ENCODE measurements at regions of chr15 and their contacts with region 1.

Region 1: GRCh38 chr15:74322181-74323076 is 45.0 kb downstream of the CYP11A1 start:
- DNase-seq: peak; percentile 38
- ATAC-seq: peak; percentile 81
- H3K4me3 Mint-ChIP-seq: no peak overlapping the region
- H3K27ac Mint-ChIP-seq: no peak overlapping the region
- H3K4me1 Mint-ChIP-seq: peaks cover 2% of the 10 kb centered on the region
- H3K27me3 Mint-ChIP-seq: peaks cover 10% of the 10 kb centered on the region
- CTCF ChIP-seq: no peak

Region 2: GRCh38 chr15:74038707-74039655 is 283.4 kb before region 1 on chr15:
- CTCF ChIA-PET with region 1: no interaction called
- POLR2A ChIA-PET with region 1: no interaction called
- intact Hi-C with region 1: no loop called
- DNase-seq: no peak
- ATAC-seq: no peak
- H3K4me3 Mint-ChIP-seq: no peak overlapping the region
- H3K27ac Mint-ChIP-seq: no peak overlapping the region
- H3K4me1 Mint-ChIP-seq: no peaks in the 10 kb centered on the region
- H3K27me3 Mint-ChIP-seq: no peaks in the 10 kb centered on the region
- CTCF ChIP-seq: no peak

Region 3: DNA sequence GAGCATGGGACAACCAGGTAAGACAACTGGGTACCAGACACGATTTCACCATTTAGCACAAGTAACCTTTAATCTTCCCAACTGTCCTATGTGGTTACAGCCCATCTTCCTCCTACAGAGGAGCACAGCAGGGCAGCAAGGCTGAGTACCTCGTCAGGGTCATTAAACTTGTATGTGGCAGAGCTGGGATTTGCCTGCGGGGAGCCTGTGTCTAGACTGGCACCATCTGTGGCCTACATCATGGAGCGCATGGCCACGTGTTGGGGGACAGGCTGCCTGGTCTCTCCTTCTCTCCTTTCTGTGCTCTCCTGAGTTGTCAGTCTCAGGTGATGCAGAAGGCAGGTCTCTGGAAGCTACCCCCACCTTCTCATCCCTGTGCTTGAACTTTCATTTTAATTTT is 272.3 kb before region 1 on chr15:
- CTCF ChIA-PET with region 1: interaction called, 5 read pairs
- POLR2A ChIA-PET with region 1: no interaction called
- intact Hi-C with region 1: loop called (anchors 2 kb)
- DNase-seq: no peak
- ATAC-seq: no peak
- H3K4me3 Mint-ChIP-seq: no peak overlapping the region
- H3K27ac Mint-ChIP-seq: no peak overlapping the region
- H3K4me1 Mint-ChIP-seq: peaks cover 20% of the 10 kb centered on the region
- H3K27me3 Mint-ChIP-seq: no peaks in the 10 kb centered on the region
- CTCF ChIP-seq: no peak

Region 4: GRCh38 chr15:74127260-74127953 is 195.0 kb before region 1 on chr15:
- CTCF ChIA-PET with region 1: interaction called, 6 read pairs
- POLR2A ChIA-PET with region 1: no interaction called
- intact Hi-C with region 1: loop called (anchors 1 kb)
- DNase-seq: peak; percentile 83
- ATAC-seq: peak; percentile 79
- H3K4me3 Mint-ChIP-seq: peak overlapping the region; percentile 61
- H3K27ac Mint-ChIP-seq: no peak overlapping the region
- H3K4me1 Mint-ChIP-seq: peaks cover 68% of the 10 kb centered on the region
- H3K27me3 Mint-ChIP-seq: peaks cover 41% of the 10 kb centered on the region
- CTCF ChIP-seq: peak; percentile 71

Region 5: DNA sequence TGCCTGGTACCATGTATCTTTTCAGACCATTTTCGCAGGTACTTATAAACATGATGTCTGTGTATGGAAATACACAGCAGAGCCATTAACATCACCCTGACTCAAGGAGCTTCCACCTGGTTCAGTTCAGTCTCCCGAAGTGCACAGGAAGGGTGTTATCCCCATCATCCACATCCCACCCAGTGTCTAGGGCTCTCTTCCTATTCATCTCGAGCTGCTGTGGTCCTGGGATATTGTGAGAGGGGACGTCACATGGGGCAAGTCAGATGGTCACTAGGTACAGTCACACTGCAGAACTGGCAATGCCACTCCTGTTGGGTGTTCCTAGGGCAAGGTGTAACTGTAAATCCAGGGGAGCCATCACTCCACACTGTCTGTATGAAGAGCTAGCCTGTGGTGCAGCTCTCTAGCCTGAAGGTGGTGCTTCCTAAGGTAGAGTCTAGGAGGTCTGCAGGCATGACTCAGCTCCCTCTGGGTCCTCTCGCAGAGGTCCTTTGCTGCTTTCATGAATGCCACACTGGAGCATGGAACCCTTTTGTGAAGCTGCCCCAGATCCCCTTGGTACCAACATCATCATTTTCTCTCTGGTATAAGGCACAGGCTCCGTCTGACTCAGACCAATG is 178.2 kb before region 1 on chr15:
- CTCF ChIA-PET with region 1: no interaction called
- POLR2A ChIA-PET with region 1: no interaction called
- intact Hi-C with region 1: no loop called
- DNase-seq: no peak
- ATAC-seq: no peak
- H3K4me3 Mint-ChIP-seq: no peak overlapping the region
- H3K27ac Mint-ChIP-seq: no peak overlapping the region
- H3K4me1 Mint-ChIP-seq: no peaks in the 10 kb centered on the region
- H3K27me3 Mint-ChIP-seq: peaks cover 37% of the 10 kb centered on the region
- CTCF ChIP-seq: no peak

Region 6: DNA sequence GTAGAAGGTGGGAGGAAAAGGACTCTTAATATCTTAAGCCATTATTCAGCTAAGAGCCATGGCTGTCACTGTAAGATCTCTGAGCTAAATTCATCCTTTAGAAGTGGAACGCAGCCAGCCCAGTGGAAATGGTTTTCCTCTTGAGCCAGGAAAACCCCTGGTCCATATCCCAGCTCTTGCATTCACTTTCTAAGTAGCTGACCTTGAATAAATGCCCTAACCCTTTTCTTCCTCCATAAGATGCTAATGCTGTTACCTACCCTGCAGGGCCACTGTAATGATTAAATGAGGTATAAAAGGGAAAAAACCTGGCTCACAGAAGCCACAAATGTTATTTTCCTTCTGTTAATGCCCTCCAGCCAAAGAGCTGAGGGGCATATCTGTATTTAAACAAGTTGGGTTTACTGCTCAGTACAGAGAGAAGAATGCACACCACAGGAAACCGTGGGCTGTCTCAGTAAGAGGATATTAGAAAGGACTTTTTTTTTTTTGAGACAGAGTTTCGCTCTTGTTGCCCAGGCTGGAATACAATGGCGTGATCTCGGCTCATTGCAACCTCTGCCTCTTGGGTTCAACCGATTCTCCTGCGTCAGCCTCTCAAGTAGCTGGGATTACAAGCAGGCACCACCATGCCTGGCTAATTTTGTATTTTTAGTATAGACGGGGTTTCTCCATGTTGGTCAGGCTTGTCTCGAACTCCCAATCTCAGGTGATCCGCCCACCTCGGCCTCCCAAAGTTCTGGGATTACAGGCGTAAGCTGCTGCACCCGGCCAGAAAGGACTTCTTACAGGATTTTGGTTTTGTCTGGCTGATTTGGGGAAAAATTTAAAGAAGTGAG is 131.7 kb after region 1 on chr15:
- CTCF ChIA-PET with region 1: no interaction called
- POLR2A ChIA-PET with region 1: no interaction called
- intact Hi-C with region 1: no loop called
- DNase-seq: no peak
- ATAC-seq: no peak
- H3K4me3 Mint-ChIP-seq: no peak overlapping the region
- H3K27ac Mint-ChIP-seq: no peak overlapping the region
- H3K4me1 Mint-ChIP-seq: peaks cover 4% of the 10 kb centered on the region
- H3K27me3 Mint-ChIP-seq: no peaks in the 10 kb centered on the region
- CTCF ChIP-seq: no peak

Measured in activated B cell treated with CpG ODN at 0.5 μM for 24 hours (primary cell).